H1 (cell line): ENCODE measurements at regions of chr3 and their contacts with region 1.

Region 1: GRCh38 chr3:192444096-192444790 is 283.1 kb downstream of the FGF12 start:
- DNase-seq: peak; percentile 47 to 88
- H3K4me3 ChIP-seq: no peak overlapping the region
- H3K27ac ChIP-seq: no peak overlapping the region
- H3K4me1 ChIP-seq: peaks cover 0 to 4% (median 0%) of the 10 kb centered on the region in 4 experiments; a peak in 1 of 7 replicates
- H3K27me3 ChIP-seq: peaks cover 0 to 1% (median 0%) of the 10 kb centered on the region in 4 experiments; a peak in 1 of 7 replicates
- CTCF ChIP-seq: peak; percentile 93 to 98 (median 95)
- EP300 ChIP-seq: no peak
- POLR2A ChIP-seq: no peak
- RAD21 ChIP-seq: peak; percentile 99 to 100

Region 2: GRCh38 chr3:192130534-192131132 is 313.6 kb before region 1 on chr3:
- CTCF ChIA-PET with region 1: interaction called, 13 read pairs
- POLR2A ChIA-PET with region 1: no interaction called
- DNase-seq: peak; percentile 5 to 47
- H3K4me3 ChIP-seq: no peak overlapping the region
- H3K27ac ChIP-seq: no peak overlapping the region
- H3K4me1 ChIP-seq: no peaks in the 10 kb centered on the region
- H3K27me3 ChIP-seq: no peaks in the 10 kb centered on the region
- CTCF ChIP-seq: peak; percentile 6 to 88 (median 63)
- EP300 ChIP-seq: no peak
- POLR2A ChIP-seq: no peak
- RAD21 ChIP-seq: peak; percentile 71 to 76

Region 3: DNA sequence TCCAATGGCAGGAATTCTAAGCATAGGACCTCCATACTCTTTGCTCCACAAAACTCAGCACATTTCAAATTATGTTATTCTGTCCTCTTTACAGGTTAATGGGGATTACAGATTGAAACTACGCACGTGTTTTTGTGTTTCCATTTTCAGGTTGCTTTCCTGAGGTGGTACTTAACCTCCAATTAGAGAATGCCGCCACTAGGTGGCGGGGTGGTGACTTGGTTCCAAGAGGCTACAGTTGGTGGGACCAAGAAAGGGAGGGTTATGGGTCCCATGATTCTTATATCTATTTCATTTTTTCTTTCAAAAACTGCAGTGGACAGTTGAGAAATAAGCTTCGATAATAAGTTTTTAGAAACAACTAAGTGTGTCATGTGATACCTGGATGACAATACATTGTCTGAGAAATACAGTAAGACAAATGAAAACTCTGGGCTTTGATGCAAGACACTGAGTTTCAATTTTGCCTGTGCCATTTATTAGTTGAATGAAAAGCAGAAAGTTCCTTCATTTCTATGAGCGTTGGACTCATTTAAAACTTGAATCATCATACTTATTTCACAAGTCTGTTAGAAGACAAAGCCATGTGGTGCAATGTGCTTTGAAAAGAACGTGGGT is 255.9 kb before region 1 on chr3:
- CTCF ChIA-PET with region 1: interaction called, 17 read pairs
- POLR2A ChIA-PET with region 1: no interaction called
- DNase-seq: peak; percentile 49 to 81
- H3K4me3 ChIP-seq: no peak overlapping the region
- H3K27ac ChIP-seq: no peak overlapping the region
- H3K4me1 ChIP-seq: peaks cover 0 to 3% (median 0%) of the 10 kb centered on the region in 4 experiments; a peak in 1 of 7 replicates
- H3K27me3 ChIP-seq: peaks cover 0 to 2% (median 0%) of the 10 kb centered on the region in 4 experiments; a peak in 1 of 7 replicates
- CTCF ChIP-seq: peak; percentile 58 to 79 (median 75)
- EP300 ChIP-seq: no peak
- POLR2A ChIP-seq: no peak
- RAD21 ChIP-seq: peak; percentile 77 to 84

Region 4: GRCh38 chr3:192212335-192212734 is 231.9 kb before region 1 on chr3:
- CTCF ChIA-PET with region 1: interaction called, 12 read pairs
- POLR2A ChIA-PET with region 1: no interaction called
- DNase-seq: no peak
- H3K4me3 ChIP-seq: no peak overlapping the region
- H3K27ac ChIP-seq: no peak overlapping the region
- H3K4me1 ChIP-seq: peaks cover 0 to 5% (median 2%) of the 10 kb centered on the region in 4 experiments; a peak in 3 of 7 replicates
- H3K27me3 ChIP-seq: no peaks in the 10 kb centered on the region
- CTCF ChIP-seq: peak in 1 of 3 experiments; percentile 16; a peak in 1 of 4 replicates
- EP300 ChIP-seq: no peak
- POLR2A ChIP-seq: no peak
- RAD21 ChIP-seq: peak in 1 of 2 experiments; percentile 13; a peak in 1 of 4 replicates

Region 5: GRCh38 chr3:192409357-192409824 is 34.9 kb before region 1 on chr3:
- CTCF ChIA-PET with region 1: interaction called, 26 read pairs
- POLR2A ChIA-PET with region 1: no interaction called
- DNase-seq: peak in 1 of 2 experiments; percentile 80
- H3K4me3 ChIP-seq: peak overlapping the region; percentile 58 to 84 (median 76)
- H3K27ac ChIP-seq: no peak overlapping the region
- H3K4me1 ChIP-seq: peaks cover 2 to 8% (median 4%) of the 10 kb centered on the region in 4 experiments; a peak in 6 of 7 replicates
- H3K27me3 ChIP-seq: peaks cover 6 to 50% (median 34%) of the 10 kb centered on the region in 4 experiments
- CTCF ChIP-seq: no peak
- EP300 ChIP-seq: no peak
- POLR2A ChIP-seq: no peak
- RAD21 ChIP-seq: no peak

Region 6: GRCh38 chr3:192423003-192423349 is 21.3 kb before region 1 on chr3:
- CTCF ChIA-PET with region 1: interaction called, 36 read pairs
- POLR2A ChIA-PET with region 1: no interaction called
- DNase-seq: no peak
- H3K4me3 ChIP-seq: no peak overlapping the region
- H3K27ac ChIP-seq: no peak overlapping the region
- H3K4me1 ChIP-seq: no peaks in the 10 kb centered on the region
- H3K27me3 ChIP-seq: no peaks in the 10 kb centered on the region
- CTCF ChIP-seq: peak in 2 of 3 experiments; percentile 7 to 18; a peak in 2 of 4 replicates
- EP300 ChIP-seq: no peak
- POLR2A ChIP-seq: no peak
- RAD21 ChIP-seq: peak; percentile 47 to 53

Region 7: DNA sequence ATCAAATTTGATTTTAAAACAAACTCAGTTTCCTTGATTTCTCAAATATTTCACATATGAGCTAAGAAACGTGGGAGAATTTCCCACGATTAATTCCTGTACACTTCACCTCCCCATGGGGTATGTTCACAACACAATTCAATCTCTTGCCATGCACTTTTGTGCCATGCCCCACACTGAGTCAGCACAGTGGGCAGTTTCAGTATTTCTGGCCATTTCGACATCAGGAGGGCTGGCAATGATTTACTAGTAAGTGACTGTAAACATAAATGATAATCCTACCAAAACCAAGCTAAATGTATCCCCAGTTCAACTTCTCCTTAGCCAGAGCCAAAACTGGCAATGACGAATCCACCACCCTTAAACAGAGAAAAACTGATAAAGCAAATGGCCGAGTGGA is 10.5 kb before region 1 on chr3:
- CTCF ChIA-PET with region 1: interaction called, 29 read pairs
- POLR2A ChIA-PET with region 1: no interaction called
- DNase-seq: no peak
- H3K4me3 ChIP-seq: no peak overlapping the region
- H3K27ac ChIP-seq: no peak overlapping the region
- H3K4me1 ChIP-seq: no peaks in the 10 kb centered on the region
- H3K27me3 ChIP-seq: no peaks in the 10 kb centered on the region
- CTCF ChIP-seq: no peak
- EP300 ChIP-seq: no peak
- POLR2A ChIP-seq: no peak
- RAD21 ChIP-seq: no peak

Region 8: GRCh38 chr3:193078996-193079753 is 634.9 kb after region 1 on chr3:
- CTCF ChIA-PET with region 1: no interaction called
- POLR2A ChIA-PET with region 1: no interaction called
- DNase-seq: no peak
- H3K4me3 ChIP-seq: no peak overlapping the region
- H3K27ac ChIP-seq: no peak overlapping the region
- H3K4me1 ChIP-seq: no peaks in the 10 kb centered on the region
- H3K27me3 ChIP-seq: no peaks in the 10 kb centered on the region
- CTCF ChIP-seq: no peak
- EP300 ChIP-seq: no peak
- POLR2A ChIP-seq: no peak
- RAD21 ChIP-seq: no peak